ENCODE measurements at regions of chr9 and their contacts with region 1.

Region 1: GRCh38 chr9:127869310-127870152 is 7.9 kb downstream of the AK1 start:
- DNase-seq: peak; percentile 87
- ATAC-seq: peak; percentile 89
- H3K4me3 Mint-ChIP-seq: no peak overlapping the region
- H3K27ac Mint-ChIP-seq: no peak overlapping the region
- H3K4me1 Mint-ChIP-seq: peaks cover 23% of the 10 kb centered on the region
- H3K27me3 Mint-ChIP-seq: no peaks in the 10 kb centered on the region

Region 2: GRCh38 chr9:127742435-127743088 is 127.0 kb before region 1 on chr9:
- CTCF ChIA-PET with region 1: interaction called, 16 read pairs
- POLR2A ChIA-PET with region 1: no interaction called
- DNase-seq: no peak
- ATAC-seq: no peak
- H3K4me3 Mint-ChIP-seq: no peak overlapping the region
- H3K27ac Mint-ChIP-seq: no peak overlapping the region
- H3K4me1 Mint-ChIP-seq: peaks cover 9% of the 10 kb centered on the region
- H3K27me3 Mint-ChIP-seq: no peaks in the 10 kb centered on the region

Region 3: GRCh38 chr9:127770905-127771569 is 98.5 kb before region 1 on chr9:
- CTCF ChIA-PET with region 1: interaction called, 47 read pairs
- POLR2A ChIA-PET with region 1: no interaction called
- DNase-seq: peak; percentile 98
- ATAC-seq: peak; percentile 92
- H3K4me3 Mint-ChIP-seq: peak overlapping the region; percentile 89
- H3K27ac Mint-ChIP-seq: peak overlapping the region; percentile 85
- H3K4me1 Mint-ChIP-seq: peaks cover 86% of the 10 kb centered on the region
- H3K27me3 Mint-ChIP-seq: no peaks in the 10 kb centered on the region

Region 4: GRCh38 chr9:127785023-127785932 is 84.3 kb before region 1 on chr9:
- CTCF ChIA-PET with region 1: interaction called, 55 read pairs
- POLR2A ChIA-PET with region 1: interaction called, 4 read pairs
- DNase-seq: peak; percentile 93
- ATAC-seq: peak; percentile 46
- H3K4me3 Mint-ChIP-seq: peak overlapping the region; percentile 77
- H3K27ac Mint-ChIP-seq: peak overlapping the region; percentile 95
- H3K4me1 Mint-ChIP-seq: peaks cover 75% of the 10 kb centered on the region
- H3K27me3 Mint-ChIP-seq: no peaks in the 10 kb centered on the region

Region 5: DNA sequence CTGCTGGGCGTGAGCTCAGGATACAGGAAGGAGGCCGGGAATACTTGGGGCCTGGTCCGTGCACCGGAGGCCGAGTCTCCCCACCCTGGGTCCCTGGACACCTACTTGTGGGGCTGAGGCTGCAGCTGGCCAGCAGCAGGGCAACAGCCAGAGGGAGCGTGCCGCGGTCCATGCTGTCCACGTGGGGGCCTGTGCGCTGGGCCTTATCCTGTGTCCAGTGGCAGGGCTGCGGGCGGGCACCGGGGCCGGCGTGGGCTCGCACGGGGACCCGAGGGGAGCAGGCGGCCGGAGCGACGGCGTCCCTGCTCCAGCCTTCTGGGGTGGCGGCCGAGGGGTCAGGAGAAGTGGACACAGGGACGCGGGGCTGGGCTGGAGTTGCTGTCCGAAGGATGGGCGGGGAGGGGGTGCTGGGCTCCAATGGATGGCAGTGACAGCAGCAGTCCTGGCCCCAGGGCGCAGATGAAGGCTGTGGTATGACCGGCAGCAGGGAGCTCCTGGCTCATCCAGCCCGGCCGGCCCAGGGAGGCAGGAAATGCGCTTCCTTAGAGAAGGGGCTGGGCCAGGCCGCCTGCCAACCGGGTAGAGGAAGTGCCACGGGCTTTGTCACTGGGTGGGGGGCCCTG is 15.2 kb before region 1 on chr9 and contains the start of gene ENG:
- CTCF ChIA-PET with region 1: interaction called, 49 read pairs
- POLR2A ChIA-PET with region 1: interaction called, 14 read pairs
- DNase-seq: no peak
- ATAC-seq: peak; percentile 68
- H3K4me3 Mint-ChIP-seq: peak within 1 kb of the TSS; percentile 85
- H3K27ac Mint-ChIP-seq: peak within 1 kb of the TSS; percentile 86
- H3K4me1 Mint-ChIP-seq: peaks cover 44% of the 10 kb centered on the region
- H3K27me3 Mint-ChIP-seq: no peaks in the 10 kb centered on the region
- total RNA-seq, gene ENG: 22.9 to 24.3 TPM

Region 6: DNA sequence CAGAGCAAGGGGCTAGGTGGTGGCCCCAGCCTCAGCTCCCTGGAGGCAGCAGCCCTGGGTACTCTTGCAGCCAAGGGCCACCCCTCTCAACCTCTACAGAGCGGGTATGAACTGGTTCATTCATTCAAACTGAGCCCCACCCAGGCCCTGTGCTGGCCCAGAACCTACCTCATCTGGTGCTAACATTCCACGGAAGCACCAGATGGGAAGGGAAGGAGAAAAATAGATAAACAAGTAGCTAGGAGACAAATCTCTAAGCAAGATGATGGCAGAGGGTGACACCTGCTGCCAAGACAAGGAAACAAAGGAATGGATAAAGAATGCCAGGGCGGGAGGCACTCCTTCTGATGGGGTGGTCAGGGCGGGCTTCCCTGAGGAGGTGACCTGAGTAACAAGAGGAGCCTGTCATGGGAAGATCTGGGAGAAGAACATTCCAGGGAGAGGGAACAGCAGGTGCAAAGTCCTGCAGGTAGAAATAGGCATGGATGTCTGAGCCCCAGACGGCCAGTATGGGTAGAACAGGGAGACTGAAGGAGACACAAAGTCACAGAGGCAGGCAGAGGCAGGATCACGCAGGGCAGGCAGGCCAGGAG is 41.2 kb after region 1 on chr9:
- CTCF ChIA-PET with region 1: interaction called, 17 read pairs
- POLR2A ChIA-PET with region 1: no interaction called
- DNase-seq: no peak
- ATAC-seq: no peak
- H3K4me3 Mint-ChIP-seq: no peak overlapping the region
- H3K27ac Mint-ChIP-seq: peak overlapping the region; percentile 76
- H3K4me1 Mint-ChIP-seq: peaks cover 71% of the 10 kb centered on the region
- H3K27me3 Mint-ChIP-seq: no peaks in the 10 kb centered on the region

Region 7: DNA sequence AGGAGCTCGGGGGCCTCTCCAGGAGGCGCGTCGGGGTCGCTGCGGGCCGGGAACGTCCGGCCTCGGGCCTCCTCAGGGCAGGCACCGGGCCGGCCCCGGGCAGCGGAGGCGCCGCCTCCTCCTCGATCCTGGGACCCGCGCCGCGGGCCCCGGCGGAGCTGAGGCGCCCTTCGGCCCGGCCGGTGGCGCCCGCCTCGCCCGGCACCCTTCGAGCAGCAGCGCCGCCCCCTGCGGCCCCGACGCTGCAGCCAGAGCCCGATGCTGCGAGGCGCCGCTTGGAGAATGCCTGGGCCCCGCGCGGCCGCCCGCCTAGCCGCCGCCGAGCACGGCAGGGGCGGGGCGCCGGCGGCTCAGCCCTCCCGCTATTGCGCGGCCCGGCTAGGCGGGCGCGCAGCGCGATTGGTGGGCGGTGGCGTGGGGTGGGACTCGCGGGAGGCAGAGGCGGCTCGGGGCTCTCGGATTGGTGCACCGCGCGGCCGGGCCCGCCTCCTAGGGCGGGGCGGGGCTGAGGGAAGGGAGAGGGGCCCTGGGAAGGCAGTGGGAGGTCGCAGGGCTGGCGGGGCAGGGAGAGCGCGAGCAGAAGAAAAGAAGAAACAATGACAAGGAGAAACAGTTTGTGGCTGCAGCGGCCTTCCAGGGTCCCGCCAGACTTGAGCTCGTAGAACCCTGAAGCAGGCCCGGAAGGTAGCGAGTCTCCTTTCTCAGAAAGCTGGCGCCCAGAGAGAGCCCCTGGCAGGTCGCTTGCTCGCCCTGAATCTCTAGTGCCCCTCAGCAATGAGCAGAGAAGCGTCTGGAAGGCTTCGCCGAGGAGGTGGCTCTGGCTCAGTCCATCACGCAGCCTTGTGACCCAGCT is 111.4 kb after region 1 on chr9 and contains the start of gene EEIG1:
- CTCF ChIA-PET with region 1: no interaction called
- POLR2A ChIA-PET with region 1: no interaction called
- DNase-seq: peak; percentile 97
- ATAC-seq: peak; percentile 93
- H3K4me3 Mint-ChIP-seq: peak within 1 kb of the TSS; percentile 97
- H3K27ac Mint-ChIP-seq: peak within 1 kb of the TSS; percentile 92
- H3K4me1 Mint-ChIP-seq: peaks cover 45% of the 10 kb centered on the region
- H3K27me3 Mint-ChIP-seq: no peaks in the 10 kb centered on the region
- total RNA-seq, gene EEIG1: 227 to 232 TPM